ENCODE measurements at regions of chr7 and their contacts with region 1.

Region 1: GRCh38 chr7:114944745-114945625 is 23.1 kb downstream of the MDFIC start:
- DNase-seq: no peak
- H3K4me3 ChIP-seq: no peak overlapping the region
- H3K4me3 Mint-ChIP-seq: peak overlapping the region in 1 of 8 donors; percentile 27
- H3K27ac ChIP-seq: no peak overlapping the region
- H3K27ac Mint-ChIP-seq: peak overlapping the region in 5 of 7 donors; percentile 16 to 83 (median 36)
- H3K4me1 ChIP-seq: peaks cover 75% of the 10 kb centered on the region
- H3K4me1 Mint-ChIP-seq: peaks cover 72 to 94% (median 83%) of the 10 kb centered on the region in 4 donors
- H3K27me3 ChIP-seq: no peaks in the 10 kb centered on the region
- H3K27me3 Mint-ChIP-seq: no peaks in the 10 kb centered on the region

Region 2: GRCh38 chr7:114930829-114931655 is 13.9 kb before region 1 on chr7:
- CTCF ChIA-PET with region 1: interaction called, 23 read pairs
- POLR2A ChIA-PET with region 1: interaction called, 5 read pairs
- intact Hi-C with region 1: loop called (anchors 1 kb)
- DNase-seq: no peak
- H3K4me3 ChIP-seq: peak overlapping the region; percentile 54 to 62
- H3K4me3 Mint-ChIP-seq: peak overlapping the region in 2 of 8 donors; percentile 79 to 89
- H3K27ac ChIP-seq: peak overlapping the region; percentile 59
- H3K27ac Mint-ChIP-seq: peak overlapping the region in 4 of 7 donors; percentile 91 to 94 (median 92)
- H3K4me1 ChIP-seq: peaks cover 96% of the 10 kb centered on the region
- H3K4me1 Mint-ChIP-seq: peaks cover 12 to 52% (median 24%) of the 10 kb centered on the region in 4 donors
- H3K27me3 ChIP-seq: no peaks in the 10 kb centered on the region
- H3K27me3 Mint-ChIP-seq: no peaks in the 10 kb centered on the region

Region 3: DNA sequence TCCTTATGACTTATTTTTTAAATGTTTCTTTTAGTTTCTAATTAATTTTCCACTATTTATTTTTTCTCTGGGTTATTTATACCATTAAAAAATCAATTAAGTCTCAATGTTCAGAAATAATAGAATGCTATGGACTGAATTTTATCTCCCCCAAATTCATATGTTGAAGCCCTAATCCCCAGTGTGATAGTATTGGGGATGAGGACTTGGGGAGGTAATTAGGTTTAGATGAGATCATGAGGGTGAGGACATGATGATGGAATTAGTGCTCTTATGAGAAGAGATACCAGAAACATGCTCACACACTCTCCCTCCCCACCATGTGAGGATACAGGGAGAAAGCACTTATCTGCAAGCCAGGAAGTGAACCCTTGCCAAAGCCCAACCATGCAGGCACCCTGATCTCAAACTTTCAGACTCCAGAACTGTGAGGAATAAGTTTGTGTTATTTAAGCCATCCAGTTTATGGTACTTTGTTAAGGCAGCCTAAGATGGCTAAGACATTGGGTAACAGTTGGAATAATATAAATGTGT is 179.5 kb after region 1 on chr7:
- CTCF ChIA-PET with region 1: no interaction called
- POLR2A ChIA-PET with region 1: no interaction called
- intact Hi-C with region 1: no loop called
- DNase-seq: no peak
- H3K4me3 ChIP-seq: no peak overlapping the region
- H3K4me3 Mint-ChIP-seq: no peak overlapping the region
- H3K27ac ChIP-seq: no peak overlapping the region
- H3K27ac Mint-ChIP-seq: no peak overlapping the region
- H3K4me1 ChIP-seq: peaks cover 10% of the 10 kb centered on the region
- H3K4me1 Mint-ChIP-seq: peaks cover 13 to 28% (median 18%) of the 10 kb centered on the region in 4 donors
- H3K27me3 ChIP-seq: no peaks in the 10 kb centered on the region
- H3K27me3 Mint-ChIP-seq: no peaks in the 10 kb centered on the region

Measured in CD4-positive, alpha-beta memory T cell (primary cell).